Right cardiac atrium (tissue), 5 donors: ENCODE measurements at regions of chrX and their contacts with region 1.

Region 1: GRCh38 chrX:19659925-19660324 is 144.6 kb upstream of the MAP3K15 start:
- DNase-seq: no peak
- ATAC-seq: no peak
- H3K4me3 ChIP-seq: no peak overlapping the region
- H3K27ac ChIP-seq: no peak overlapping the region
- H3K4me1 ChIP-seq: no peaks in the 10 kb centered on the region
- H3K27me3 ChIP-seq: no peaks in the 10 kb centered on the region

Region 2: GRCh38 chrX:19593690-19594089 is 66.2 kb before region 1 on chrX:
- intact Hi-C with region 1: loop called in 1 of 4 experiments (anchors 10 kb)
- DNase-seq: no peak
- ATAC-seq: no peak
- H3K4me3 ChIP-seq: no peak overlapping the region
- H3K27ac ChIP-seq: no peak overlapping the region
- H3K4me1 ChIP-seq: no peaks in the 10 kb centered on the region
- H3K27me3 ChIP-seq: no peaks in the 10 kb centered on the region